MCF 10A (cell line): ENCODE measurements at regions of chr12 and their contacts with region 1.

Region 1: DNA sequence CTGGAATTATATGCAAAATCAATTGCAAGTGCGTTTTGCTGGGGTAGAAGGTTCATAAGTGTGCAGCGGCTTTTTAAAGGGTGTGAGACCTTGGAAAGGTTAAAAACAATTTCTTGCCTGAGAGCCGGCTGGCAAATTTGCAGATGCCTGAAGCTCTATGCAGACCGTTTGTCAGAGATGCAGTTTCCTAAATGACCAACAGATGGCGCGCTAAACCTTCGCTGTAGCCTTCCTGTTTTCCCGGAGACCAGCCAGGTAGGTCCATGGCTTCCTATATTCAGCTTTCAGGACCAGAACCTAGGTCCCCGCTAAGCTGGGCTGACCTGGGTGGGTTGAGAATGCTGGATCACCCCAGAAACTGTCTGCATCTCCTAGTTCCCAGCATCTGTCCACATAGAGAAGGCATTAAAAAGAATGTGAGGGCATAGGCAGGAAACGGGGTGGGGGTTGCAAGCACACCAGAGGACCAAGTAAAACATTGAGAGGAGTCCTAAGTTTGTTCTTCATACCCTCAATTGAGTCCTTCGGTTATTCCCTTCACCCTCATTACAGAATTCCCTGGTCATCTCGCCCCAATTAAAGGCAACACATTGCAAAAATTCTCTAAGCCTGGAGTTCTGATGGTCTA is 5.7 kb upstream of the NOS1 start:
- DNase-seq: peak; percentile 79
- H3K4me3 Mint-ChIP-seq: no peak overlapping the region
- H3K27ac Mint-ChIP-seq: no peak overlapping the region
- H3K4me1 Mint-ChIP-seq: peaks cover 7% of the 10 kb centered on the region
- H3K27me3 Mint-ChIP-seq: peaks cover 26% of the 10 kb centered on the region
- CTCF ChIP-seq: peak; percentile 81

Region 2: DNA sequence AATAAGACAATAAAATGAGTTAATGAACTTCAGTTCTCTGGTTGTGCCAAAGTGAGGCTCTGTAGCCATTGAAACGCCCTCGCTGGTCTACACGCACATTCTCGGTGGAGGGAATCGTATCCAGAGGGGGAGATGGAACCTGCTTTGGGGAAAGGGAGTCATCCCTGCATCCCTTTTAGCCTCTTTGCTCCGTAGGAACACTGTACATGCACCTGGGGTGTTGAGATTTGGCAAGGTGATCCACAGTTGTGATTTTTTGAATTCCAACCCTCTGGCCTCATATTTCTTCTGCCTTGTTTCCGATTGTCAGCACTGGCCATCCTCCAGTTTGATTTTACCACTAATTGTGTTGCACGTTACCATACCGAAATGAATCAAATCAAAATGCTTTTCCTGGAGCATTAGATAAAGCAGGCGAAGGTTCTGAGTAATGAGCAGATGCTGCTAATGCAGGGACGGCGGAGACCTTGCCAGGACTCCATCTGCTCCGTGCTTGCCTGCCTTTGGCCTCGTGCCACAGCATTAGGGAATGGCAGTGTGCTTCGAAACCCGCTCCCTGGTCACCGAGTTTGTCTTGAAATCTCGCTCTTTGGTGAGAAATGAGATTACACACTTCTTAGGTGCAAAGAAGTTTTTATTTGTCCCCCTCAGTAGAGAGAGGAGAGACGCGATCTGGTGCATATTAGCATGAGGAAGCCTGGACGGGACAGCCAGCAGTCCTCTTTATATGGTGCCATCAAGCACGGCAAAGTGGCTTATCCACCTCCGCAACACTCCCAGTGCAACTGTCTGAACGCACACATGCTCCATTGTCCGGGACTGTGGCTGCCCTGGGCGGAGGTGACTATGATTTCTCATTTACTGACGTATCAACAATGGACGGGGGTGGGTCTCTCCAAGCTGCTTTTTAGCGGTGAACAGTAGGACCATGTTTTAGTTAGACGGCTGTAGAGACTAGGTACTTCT is 397.2 kb before region 1 on chr12:
- CTCF ChIA-PET with region 1: no interaction called
- POLR2A ChIA-PET with region 1: no interaction called
- intact Hi-C with region 1: no loop called
- DNase-seq: no peak
- H3K4me3 Mint-ChIP-seq: no peak overlapping the region
- H3K27ac Mint-ChIP-seq: no peak overlapping the region
- H3K4me1 Mint-ChIP-seq: no peaks in the 10 kb centered on the region
- H3K27me3 Mint-ChIP-seq: no peaks in the 10 kb centered on the region
- CTCF ChIP-seq: no peak

Region 3: DNA sequence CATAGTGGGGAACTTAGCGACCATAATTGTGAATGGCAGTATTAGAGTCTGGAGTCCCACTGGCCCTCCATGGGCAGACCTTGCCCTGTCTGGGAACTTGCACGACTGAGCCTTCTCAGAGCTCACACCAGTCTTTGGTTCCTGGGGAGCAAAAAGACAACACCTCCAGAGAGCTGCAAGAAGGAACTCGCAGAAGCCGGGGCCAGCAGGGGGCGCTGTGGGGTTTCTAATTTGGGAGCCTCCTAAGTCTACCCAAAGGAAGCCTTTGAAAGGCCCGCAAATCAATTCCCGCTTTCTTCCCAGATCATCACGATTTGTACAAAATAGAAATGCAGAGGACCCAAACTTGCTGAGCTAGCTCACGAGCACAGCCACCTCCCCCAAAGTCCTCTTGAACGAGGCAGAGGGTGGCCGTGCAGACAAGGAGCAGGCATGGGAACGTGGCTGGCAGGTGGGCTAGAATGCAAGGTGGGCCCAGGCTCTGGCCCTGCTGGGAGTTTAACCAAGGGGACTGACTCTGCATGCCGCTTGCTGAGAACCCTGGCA is 130.6 kb before region 1 on chr12:
- CTCF ChIA-PET with region 1: interaction called, 63 read pairs
- POLR2A ChIA-PET with region 1: no interaction called
- intact Hi-C with region 1: loop called (anchors 1 kb)
- DNase-seq: peak; percentile 75
- H3K4me3 Mint-ChIP-seq: no peak overlapping the region
- H3K27ac Mint-ChIP-seq: no peak overlapping the region
- H3K4me1 Mint-ChIP-seq: no peaks in the 10 kb centered on the region
- H3K27me3 Mint-ChIP-seq: no peaks in the 10 kb centered on the region
- CTCF ChIP-seq: peak; percentile 73

Region 4: GRCh38 chr12:117309287-117309925 is 57.7 kb before region 1 on chr12:
- CTCF ChIA-PET with region 1: no interaction called
- POLR2A ChIA-PET with region 1: no interaction called
- intact Hi-C with region 1: no loop called
- DNase-seq: no peak
- H3K4me3 Mint-ChIP-seq: no peak overlapping the region
- H3K27ac Mint-ChIP-seq: no peak overlapping the region
- H3K4me1 Mint-ChIP-seq: no peaks in the 10 kb centered on the region
- H3K27me3 Mint-ChIP-seq: no peaks in the 10 kb centered on the region
- CTCF ChIP-seq: no peak

Region 5: DNA sequence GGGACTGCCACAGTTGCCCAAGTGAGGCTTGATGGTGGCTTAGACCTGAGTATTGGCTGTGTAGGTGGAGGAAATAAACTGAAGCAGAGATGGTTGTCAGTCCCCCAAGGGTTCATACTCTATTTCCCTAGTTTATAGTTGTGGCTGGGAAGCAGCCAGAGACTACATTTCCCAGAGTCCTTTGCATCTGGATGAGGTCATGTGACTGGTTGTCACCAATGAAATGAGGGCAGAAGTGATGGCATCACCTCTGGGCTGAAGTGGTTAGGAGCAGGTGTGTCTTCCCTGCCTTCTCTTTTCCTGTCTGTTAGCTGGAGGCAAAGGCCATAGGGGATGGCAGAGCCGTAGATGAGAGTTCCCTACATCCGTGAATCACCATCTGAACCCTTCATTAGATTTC is 10.6 kb after region 1 on chr12:
- CTCF ChIA-PET with region 1: interaction called, 22 read pairs
- POLR2A ChIA-PET with region 1: no interaction called
- intact Hi-C with region 1: no loop called
- DNase-seq: peak; percentile 30
- H3K4me3 Mint-ChIP-seq: no peak overlapping the region
- H3K27ac Mint-ChIP-seq: no peak overlapping the region
- H3K4me1 Mint-ChIP-seq: no peaks in the 10 kb centered on the region
- H3K27me3 Mint-ChIP-seq: no peaks in the 10 kb centered on the region
- CTCF ChIP-seq: no peak

Region 6: DNA sequence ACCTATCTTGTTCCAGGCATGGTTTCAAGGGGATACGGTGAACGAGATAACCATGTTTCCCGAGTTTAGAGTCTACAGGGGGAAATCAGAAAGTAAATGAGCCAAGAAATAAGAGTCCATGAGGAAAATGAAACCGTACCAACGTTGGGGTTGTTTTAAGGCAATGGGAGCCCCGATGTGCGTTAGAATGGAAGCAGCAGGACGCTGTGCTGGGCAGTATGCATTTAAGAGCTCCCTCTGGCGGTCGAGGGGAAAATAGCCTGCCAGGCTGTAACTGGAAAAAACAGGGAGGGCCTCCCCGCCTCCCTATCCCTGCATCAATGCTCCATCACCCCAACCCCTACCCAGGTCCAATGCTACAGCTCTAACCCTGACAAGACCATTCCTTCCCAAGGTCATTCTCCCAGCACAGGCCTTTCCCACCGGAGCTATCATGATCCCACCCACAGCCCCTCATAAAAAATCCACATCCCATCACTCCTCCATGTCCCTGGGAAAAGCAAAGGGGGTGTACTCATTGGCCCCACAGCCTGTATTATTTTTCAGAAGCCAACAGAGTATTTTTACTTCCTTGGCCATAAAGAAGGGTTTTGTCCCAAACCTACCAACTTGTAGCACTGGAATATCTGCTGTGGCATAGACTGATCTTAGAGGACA is 220.6 kb after region 1 on chr12:
- CTCF ChIA-PET with region 1: interaction called, 128 read pairs
- POLR2A ChIA-PET with region 1: interaction called, 3 read pairs
- intact Hi-C with region 1: loop called (anchors 1 kb)
- DNase-seq: peak; percentile 65
- H3K4me3 Mint-ChIP-seq: no peak overlapping the region
- H3K27ac Mint-ChIP-seq: no peak overlapping the region
- H3K4me1 Mint-ChIP-seq: no peaks in the 10 kb centered on the region
- H3K27me3 Mint-ChIP-seq: peaks cover 21% of the 10 kb centered on the region
- CTCF ChIP-seq: peak; percentile 78

Region 7: GRCh38 chr12:117671734-117672133 is 304.6 kb after region 1 on chr12:
- CTCF ChIA-PET with region 1: interaction called, 7 read pairs
- POLR2A ChIA-PET with region 1: interaction called, 3 read pairs
- intact Hi-C with region 1: loop called (anchors 1 kb)
- DNase-seq: peak; percentile 52
- H3K4me3 Mint-ChIP-seq: no peak overlapping the region
- H3K27ac Mint-ChIP-seq: no peak overlapping the region
- H3K4me1 Mint-ChIP-seq: no peaks in the 10 kb centered on the region
- H3K27me3 Mint-ChIP-seq: peaks cover 40% of the 10 kb centered on the region
- CTCF ChIP-seq: peak; percentile 53

Region 8: DNA sequence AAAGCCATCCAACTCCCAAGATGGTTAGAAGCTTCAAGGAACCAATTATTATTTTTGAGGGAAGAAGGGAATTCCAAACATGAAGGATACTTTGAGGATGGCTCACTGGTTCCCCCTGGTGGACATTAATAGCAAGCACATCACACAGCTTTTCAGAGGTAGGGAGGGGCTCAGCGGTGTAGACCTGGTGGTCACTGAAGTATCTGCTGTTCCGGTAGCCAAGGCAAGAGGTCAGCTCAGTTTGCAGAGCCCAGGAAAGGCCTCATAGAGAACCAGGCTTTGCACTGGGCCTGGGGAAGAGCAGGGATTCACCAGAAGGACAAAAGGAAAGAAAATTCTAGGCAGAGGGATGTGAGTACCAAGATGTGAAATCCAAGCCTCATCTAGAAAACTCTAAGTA is 482.9 kb after region 1 on chr12:
- CTCF ChIA-PET with region 1: interaction called, 262 read pairs
- POLR2A ChIA-PET with region 1: no interaction called
- intact Hi-C with region 1: loop called (anchors 1 kb)
- DNase-seq: peak; percentile 77
- H3K4me3 Mint-ChIP-seq: no peak overlapping the region
- H3K27ac Mint-ChIP-seq: no peak overlapping the region
- H3K4me1 Mint-ChIP-seq: peaks cover 4% of the 10 kb centered on the region
- H3K27me3 Mint-ChIP-seq: peaks cover 44% of the 10 kb centered on the region
- CTCF ChIP-seq: peak; percentile 77